B cell (primary cell): ENCODE measurements at regions of chr17 and their contacts with region 1.

Region 1: DNA sequence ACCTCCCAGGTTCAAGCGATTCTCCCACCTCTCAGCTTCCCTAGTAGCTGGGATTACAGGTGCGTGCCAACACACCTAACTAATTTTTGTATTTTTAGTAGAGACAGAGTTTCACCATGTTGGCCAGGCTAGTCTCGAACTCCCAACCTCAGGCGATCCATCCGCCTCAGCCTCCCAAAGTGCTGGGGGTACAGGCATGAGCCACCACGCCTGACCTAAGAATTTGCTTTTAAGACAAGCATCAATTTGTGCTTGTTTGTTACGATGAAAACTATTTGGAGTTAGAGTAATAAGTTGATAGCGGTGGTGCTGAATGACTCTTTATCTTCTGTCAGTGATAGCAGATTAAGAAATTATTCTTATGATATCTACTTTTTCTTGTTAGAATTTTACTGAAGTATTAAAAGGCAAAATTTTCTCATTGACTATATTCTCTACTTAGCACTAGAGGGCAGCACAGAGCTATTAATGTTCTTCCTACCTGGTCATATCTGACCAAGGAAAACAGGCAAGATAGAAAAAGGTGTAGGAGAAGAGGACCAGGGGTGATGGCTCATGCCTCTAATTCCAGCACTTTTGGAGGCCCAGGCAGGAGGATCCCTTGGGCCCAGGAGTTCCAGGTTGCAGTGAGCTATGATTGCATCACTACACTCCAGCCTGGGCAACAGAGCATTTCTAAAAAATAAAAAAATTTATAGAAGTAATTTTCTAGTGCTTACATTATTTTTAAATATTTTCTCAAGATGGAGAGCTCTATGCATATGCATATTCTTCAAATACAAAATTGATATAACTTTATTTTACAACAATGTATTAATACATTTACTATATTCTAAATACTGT is 24.5 kb downstream of the STXBP4 start:
- DNase-seq: peak; percentile 68
- ATAC-seq: no peak
- H3K4me3 ChIP-seq: no peak overlapping the region
- H3K4me3 Mint-ChIP-seq: no peak overlapping the region
- H3K27ac ChIP-seq: no peak overlapping the region
- H3K27ac Mint-ChIP-seq: no peak overlapping the region
- H3K4me1 ChIP-seq: no peaks in the 10 kb centered on the region
- H3K4me1 Mint-ChIP-seq: no peaks in the 10 kb centered on the region
- H3K27me3 ChIP-seq: no peaks in the 10 kb centered on the region
- H3K27me3 Mint-ChIP-seq: no peaks in the 10 kb centered on the region
- CTCF ChIP-seq: peak; percentile 92

Region 2: DNA sequence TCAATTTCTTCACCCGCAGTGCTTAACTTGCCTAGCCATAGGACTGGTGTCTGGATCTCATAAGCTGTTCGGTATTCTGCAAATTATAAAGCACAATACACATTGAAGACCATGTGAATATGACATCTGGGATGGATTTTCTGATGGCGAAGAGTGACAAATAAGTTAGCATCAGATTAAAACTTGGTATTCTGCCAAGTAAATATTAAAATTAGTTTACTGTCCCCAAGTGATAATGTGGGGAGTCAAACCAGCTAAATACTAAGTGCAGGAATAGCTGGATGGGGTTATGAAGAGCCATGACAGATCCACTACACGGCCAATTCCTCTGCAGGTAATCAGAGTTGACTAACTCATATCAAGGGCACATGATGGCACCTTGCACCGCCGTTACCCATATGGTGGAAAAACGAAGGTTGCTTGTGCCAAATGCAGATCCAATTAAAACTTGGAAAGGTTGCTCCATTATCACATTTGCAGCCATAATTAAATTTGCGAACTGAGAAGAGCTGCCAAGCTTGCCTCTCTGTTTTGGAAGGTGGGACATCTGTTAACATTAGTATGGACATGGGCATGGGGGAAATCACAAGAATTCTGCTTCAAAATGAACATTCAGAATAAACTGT is 207.3 kb before region 1 on chr17:
- CTCF ChIA-PET with region 1: no interaction called
- POLR2A ChIA-PET with region 1: no interaction called
- intact Hi-C with region 1: no loop called
- DNase-seq: no peak
- ATAC-seq: no peak
- H3K4me3 ChIP-seq: no peak overlapping the region
- H3K4me3 Mint-ChIP-seq: no peak overlapping the region
- H3K27ac ChIP-seq: no peak overlapping the region
- H3K27ac Mint-ChIP-seq: no peak overlapping the region
- H3K4me1 ChIP-seq: no peaks in the 10 kb centered on the region
- H3K4me1 Mint-ChIP-seq: no peaks in the 10 kb centered on the region
- H3K27me3 ChIP-seq: no peaks in the 10 kb centered on the region
- H3K27me3 Mint-ChIP-seq: no peaks in the 10 kb centered on the region
- CTCF ChIP-seq: no peak

Region 3: DNA sequence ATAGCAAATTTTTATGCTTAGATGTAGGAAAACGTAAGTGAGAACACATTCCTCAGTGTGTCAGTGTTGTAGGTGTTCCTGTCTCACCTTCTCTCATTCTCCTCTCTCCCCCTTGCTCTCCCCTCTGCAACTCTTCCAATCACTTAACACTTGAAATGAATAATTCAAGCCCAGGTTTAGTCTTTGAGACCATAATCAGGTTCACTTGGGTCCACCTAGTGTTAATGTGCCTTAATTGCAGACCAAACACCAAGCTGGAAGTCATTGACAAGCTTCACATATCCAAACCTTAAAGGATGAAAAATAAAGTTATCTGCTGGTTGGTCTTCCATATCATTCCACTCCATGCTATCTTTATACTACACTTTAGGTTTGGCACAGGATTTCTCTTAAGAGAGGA is 12.5 kb after region 1 on chr17:
- CTCF ChIA-PET with region 1: interaction called, 30 read pairs
- POLR2A ChIA-PET with region 1: no interaction called
- intact Hi-C with region 1: no loop called
- DNase-seq: no peak
- ATAC-seq: no peak
- H3K4me3 ChIP-seq: no peak overlapping the region
- H3K4me3 Mint-ChIP-seq: no peak overlapping the region
- H3K27ac ChIP-seq: no peak overlapping the region
- H3K27ac Mint-ChIP-seq: no peak overlapping the region
- H3K4me1 ChIP-seq: no peaks in the 10 kb centered on the region
- H3K4me1 Mint-ChIP-seq: no peaks in the 10 kb centered on the region
- H3K27me3 ChIP-seq: no peaks in the 10 kb centered on the region
- H3K27me3 Mint-ChIP-seq: no peaks in the 10 kb centered on the region
- CTCF ChIP-seq: peak; percentile 30

Region 4: GRCh38 chr17:55295411-55296170 is 302.6 kb after region 1 on chr17:
- CTCF ChIA-PET with region 1: interaction called, 61 read pairs
- POLR2A ChIA-PET with region 1: no interaction called
- intact Hi-C with region 1: loop called (anchors 1 kb)
- DNase-seq: peak; percentile 62
- ATAC-seq: peak; percentile 80
- H3K4me3 ChIP-seq: no peak overlapping the region
- H3K4me3 Mint-ChIP-seq: no peak overlapping the region
- H3K27ac ChIP-seq: no peak overlapping the region
- H3K27ac Mint-ChIP-seq: no peak overlapping the region
- H3K4me1 ChIP-seq: peaks cover 8 to 20% of the 10 kb centered on the region in 2 donors
- H3K4me1 Mint-ChIP-seq: peaks cover 21% of the 10 kb centered on the region
- H3K27me3 ChIP-seq: no peaks in the 10 kb centered on the region
- H3K27me3 Mint-ChIP-seq: peaks cover 11% of the 10 kb centered on the region
- CTCF ChIP-seq: peak; percentile 93

Region 5: GRCh38 chr17:55348749-55349354 is 355.8 kb after region 1 on chr17:
- CTCF ChIA-PET with region 1: interaction called, 82 read pairs
- POLR2A ChIA-PET with region 1: no interaction called
- intact Hi-C with region 1: loop called (anchors 2 kb)
- DNase-seq: peak; percentile 60
- ATAC-seq: peak; percentile 47
- H3K4me3 ChIP-seq: no peak overlapping the region
- H3K4me3 Mint-ChIP-seq: no peak overlapping the region
- H3K27ac ChIP-seq: no peak overlapping the region
- H3K27ac Mint-ChIP-seq: no peak overlapping the region
- H3K4me1 ChIP-seq: no peaks in the 10 kb centered on the region
- H3K4me1 Mint-ChIP-seq: peaks cover 3% of the 10 kb centered on the region
- H3K27me3 ChIP-seq: peaks cover 0 to 3% (median 0%) of the 10 kb centered on the region in 4 experiments
- H3K27me3 Mint-ChIP-seq: peaks cover 11% of the 10 kb centered on the region
- CTCF ChIP-seq: peak; percentile 93

Region 6: GRCh38 chr17:55356434-55357328 is 363.7 kb after region 1 on chr17:
- CTCF ChIA-PET with region 1: interaction called, 82 read pairs
- POLR2A ChIA-PET with region 1: no interaction called
- intact Hi-C with region 1: no loop called
- DNase-seq: peak; percentile 73
- ATAC-seq: peak; percentile 87
- H3K4me3 ChIP-seq: no peak overlapping the region
- H3K4me3 Mint-ChIP-seq: peak overlapping the region; percentile 4
- H3K27ac ChIP-seq: no peak overlapping the region
- H3K27ac Mint-ChIP-seq: no peak overlapping the region
- H3K4me1 ChIP-seq: no peaks in the 10 kb centered on the region
- H3K4me1 Mint-ChIP-seq: peaks cover 5% of the 10 kb centered on the region
- H3K27me3 ChIP-seq: peaks cover 0 to 7% (median 2%) of the 10 kb centered on the region in 4 experiments
- H3K27me3 Mint-ChIP-seq: peaks cover 23% of the 10 kb centered on the region
- CTCF ChIP-seq: peak; percentile 88

Region 7: DNA sequence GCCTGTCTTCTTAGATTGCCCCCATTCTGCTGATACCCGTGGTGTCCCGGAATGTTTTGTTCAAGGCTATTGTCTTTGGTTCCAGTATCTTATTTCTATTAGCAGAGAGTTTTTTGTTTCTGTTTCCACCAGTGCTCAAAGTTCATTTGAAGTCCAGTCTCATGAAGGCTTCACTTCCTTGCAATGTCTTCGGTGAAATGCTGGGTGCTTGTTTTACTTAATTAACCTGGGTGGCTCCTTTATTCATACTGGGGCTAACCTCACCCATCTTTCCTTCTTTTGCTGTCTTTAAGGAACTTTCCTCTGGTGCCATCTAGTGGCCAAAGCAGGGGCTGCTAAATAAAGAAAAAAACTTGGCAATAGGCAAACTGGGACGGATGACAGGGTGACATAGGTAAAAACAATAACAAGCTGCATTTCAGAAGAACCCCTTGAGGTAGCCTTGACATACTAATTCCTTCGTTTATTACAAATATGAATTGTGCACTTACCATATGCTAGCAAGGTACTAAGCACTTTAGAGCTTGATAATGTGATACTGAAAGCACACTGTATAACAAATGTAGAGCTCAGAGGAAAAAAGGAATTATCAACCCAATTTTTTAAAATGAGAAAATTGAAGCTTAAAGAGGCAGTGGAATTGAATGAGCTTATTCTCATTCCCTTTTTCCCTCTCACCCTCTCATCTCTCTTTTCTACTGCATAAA is 521.0 kb after region 1 on chr17:
- CTCF ChIA-PET with region 1: interaction called, 23 read pairs
- POLR2A ChIA-PET with region 1: no interaction called
- intact Hi-C with region 1: no loop called
- DNase-seq: peak; percentile 81
- ATAC-seq: peak; percentile 49
- H3K4me3 ChIP-seq: no peak overlapping the region
- H3K4me3 Mint-ChIP-seq: no peak overlapping the region
- H3K27ac ChIP-seq: no peak overlapping the region
- H3K27ac Mint-ChIP-seq: no peak overlapping the region
- H3K4me1 ChIP-seq: peaks cover 0 to 2% of the 10 kb centered on the region in 2 donors
- H3K4me1 Mint-ChIP-seq: peaks cover 5% of the 10 kb centered on the region
- H3K27me3 ChIP-seq: no peaks in the 10 kb centered on the region
- H3K27me3 Mint-ChIP-seq: peaks cover 7% of the 10 kb centered on the region
- CTCF ChIP-seq: peak; percentile 96